ENCODE measurements at regions of chr6 and their contacts with region 1.

Region 1: GRCh38 chr6:117449549-117450439 is 24.1 kb upstream of the ROS1 start:
- DNase-seq: peak; percentile 78
- H3K4me3 Mint-ChIP-seq: no peak overlapping the region
- H3K27ac Mint-ChIP-seq: peak overlapping the region; percentile 82
- H3K4me1 Mint-ChIP-seq: peaks cover 43% of the 10 kb centered on the region
- H3K27me3 Mint-ChIP-seq: no peaks in the 10 kb centered on the region
- CTCF ChIP-seq: peak; percentile 65

Region 2: GRCh38 chr6:117352466-117353081 is 97.2 kb before region 1 on chr6:
- CTCF ChIA-PET with region 1: interaction called, 15 read pairs
- POLR2A ChIA-PET with region 1: no interaction called
- intact Hi-C with region 1: loop called (anchors 5 kb)
- DNase-seq: peak; percentile 32
- H3K4me3 Mint-ChIP-seq: no peak overlapping the region
- H3K27ac Mint-ChIP-seq: peak overlapping the region; percentile 56
- H3K4me1 Mint-ChIP-seq: peaks cover 6% of the 10 kb centered on the region
- H3K27me3 Mint-ChIP-seq: no peaks in the 10 kb centered on the region
- CTCF ChIP-seq: peak; percentile 42

Region 3: DNA sequence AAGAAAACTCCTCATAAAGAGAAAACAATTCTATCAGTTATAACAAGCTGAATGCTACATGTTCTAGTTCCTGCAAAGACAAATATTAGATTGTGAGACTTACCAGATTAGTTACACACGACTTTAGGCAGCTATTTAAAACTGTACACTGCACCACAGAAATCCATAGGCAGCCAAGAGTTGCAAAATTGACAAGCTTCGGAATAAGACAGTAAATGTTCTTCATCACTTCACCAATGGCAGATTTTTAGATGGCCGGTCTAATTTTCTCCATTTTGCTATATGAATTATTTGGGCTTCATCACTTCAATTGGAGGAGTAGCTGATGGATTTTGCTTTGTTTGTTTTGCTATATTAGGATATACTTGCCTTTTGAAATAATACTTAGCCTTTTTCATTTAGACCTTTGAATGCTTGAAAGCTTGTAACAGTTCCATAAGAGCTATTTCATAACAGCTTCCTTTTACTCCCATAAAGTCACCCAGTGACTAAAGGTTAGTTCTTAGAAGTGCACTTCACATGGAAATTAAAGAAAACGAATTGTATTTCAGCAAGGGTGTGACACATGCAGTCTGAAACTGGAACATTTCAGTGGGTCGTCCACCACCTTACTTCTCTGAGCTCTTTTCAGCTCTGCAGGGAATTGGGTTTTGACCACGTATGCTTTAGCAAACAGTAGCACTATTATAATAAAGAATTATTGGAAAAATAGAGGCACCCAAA is 24.2 kb before region 1 on chr6 and contains the start of gene ROS1:
- CTCF ChIA-PET with region 1: interaction called, 25 read pairs
- POLR2A ChIA-PET with region 1: interaction called, 222 read pairs
- intact Hi-C with region 1: loop called (anchors 1 kb)
- DNase-seq: peak; percentile 70
- H3K4me3 Mint-ChIP-seq: peak within 1 kb of the TSS; percentile 79
- H3K27ac Mint-ChIP-seq: peak within 1 kb of the TSS; percentile 76
- H3K4me1 Mint-ChIP-seq: peaks cover 24% of the 10 kb centered on the region
- H3K27me3 Mint-ChIP-seq: no peaks in the 10 kb centered on the region
- CTCF ChIP-seq: no peak
- total RNA-seq, gene ROS1: 63.0 and 69.6 TPM in 2 replicates

Region 4: GRCh38 chr6:117498159-117498558 is 48.4 kb after region 1 on chr6:
- CTCF ChIA-PET with region 1: interaction called, 5 read pairs
- POLR2A ChIA-PET with region 1: interaction called, 18 read pairs
- intact Hi-C with region 1: loop called (anchors 5 kb)
- DNase-seq: peak; percentile 80
- H3K4me3 Mint-ChIP-seq: peak overlapping the region; percentile 57
- H3K27ac Mint-ChIP-seq: peak overlapping the region; percentile 98
- H3K4me1 Mint-ChIP-seq: peaks cover 60% of the 10 kb centered on the region
- H3K27me3 Mint-ChIP-seq: no peaks in the 10 kb centered on the region
- CTCF ChIP-seq: no peak

Region 5: DNA sequence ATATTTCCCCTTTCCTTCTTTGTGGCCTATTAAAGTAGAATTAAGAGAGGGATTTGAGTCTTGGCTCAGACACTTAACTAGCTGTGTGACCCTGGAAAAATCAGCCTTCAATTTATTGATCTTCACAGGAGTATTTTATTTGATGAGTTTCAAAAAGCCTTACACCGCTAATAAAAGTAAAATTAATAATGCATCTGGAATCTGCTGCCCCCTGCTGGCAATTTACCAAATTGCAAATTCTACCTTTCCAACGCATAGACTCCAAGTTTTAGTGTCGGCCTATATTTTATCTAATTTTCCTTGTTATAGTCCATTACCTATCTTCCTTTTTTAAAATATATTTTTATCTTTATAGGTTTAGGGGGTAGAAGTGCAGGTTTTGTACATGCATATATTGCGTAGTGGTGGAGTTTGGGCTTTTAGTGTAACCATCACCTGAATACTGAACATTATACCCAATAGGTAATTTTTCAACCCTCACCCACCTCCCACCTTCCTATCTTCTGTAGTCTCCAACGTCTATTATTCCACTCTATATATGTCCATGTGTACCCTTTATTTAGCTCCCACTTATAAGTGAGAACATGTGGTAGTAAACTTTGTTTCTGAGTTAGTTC is 106.2 kb after region 1 on chr6:
- CTCF ChIA-PET with region 1: interaction called, 84 read pairs
- POLR2A ChIA-PET with region 1: interaction called, 31 read pairs
- intact Hi-C with region 1: loop called (anchors 1 kb)
- DNase-seq: peak; percentile 67
- H3K4me3 Mint-ChIP-seq: no peak overlapping the region
- H3K27ac Mint-ChIP-seq: no peak overlapping the region
- H3K4me1 Mint-ChIP-seq: peaks cover 22% of the 10 kb centered on the region
- H3K27me3 Mint-ChIP-seq: no peaks in the 10 kb centered on the region
- CTCF ChIP-seq: peak; percentile 75

Region 6: GRCh38 chr6:117829594-117830319 is 380.0 kb after region 1 on chr6:
- CTCF ChIA-PET with region 1: interaction called, 5 read pairs
- POLR2A ChIA-PET with region 1: no interaction called
- intact Hi-C with region 1: loop called (anchors 5 kb)
- DNase-seq: peak; percentile 59
- H3K4me3 Mint-ChIP-seq: peak overlapping the region; percentile 37
- H3K27ac Mint-ChIP-seq: no peak overlapping the region
- H3K4me1 Mint-ChIP-seq: peaks cover 4% of the 10 kb centered on the region
- H3K27me3 Mint-ChIP-seq: peaks cover 90% of the 10 kb centered on the region
- CTCF ChIP-seq: peak; percentile 52

Measured in MCF 10A (cell line).